ENCODE measurements at regions of chr4 and their contacts with region 1.

Region 1: GRCh38 chr4:53653484-53654053 is 62.3 kb upstream of the LNX1 start:
- DNase-seq: no peak
- H3K4me3 ChIP-seq: no peak overlapping the region
- H3K27ac ChIP-seq: no peak overlapping the region
- H3K4me1 ChIP-seq: peaks cover 0 to 9% of the 10 kb centered on the region in 2 donors
- H3K27me3 ChIP-seq: no peaks in the 10 kb centered on the region
- CTCF ChIP-seq: no peak

Region 2: GRCh38 chr4:53490965-53491622 is 162.5 kb before region 1 on chr4:
- intact Hi-C with region 1: loop called (anchors 5 kb)
- DNase-seq: peak in 1 of 2 donors; percentile 84
- H3K4me3 ChIP-seq: no peak overlapping the region
- H3K27ac ChIP-seq: peak overlapping the region in 1 of 2 donors; percentile 7
- H3K4me1 ChIP-seq: no peaks in the 10 kb centered on the region
- H3K27me3 ChIP-seq: no peaks in the 10 kb centered on the region
- CTCF ChIP-seq: peak; percentile 51 to 65 (median 60)